A549 (cell line): ENCODE measurements at regions of chr10 and their contacts with region 1.

Region 1: DNA sequence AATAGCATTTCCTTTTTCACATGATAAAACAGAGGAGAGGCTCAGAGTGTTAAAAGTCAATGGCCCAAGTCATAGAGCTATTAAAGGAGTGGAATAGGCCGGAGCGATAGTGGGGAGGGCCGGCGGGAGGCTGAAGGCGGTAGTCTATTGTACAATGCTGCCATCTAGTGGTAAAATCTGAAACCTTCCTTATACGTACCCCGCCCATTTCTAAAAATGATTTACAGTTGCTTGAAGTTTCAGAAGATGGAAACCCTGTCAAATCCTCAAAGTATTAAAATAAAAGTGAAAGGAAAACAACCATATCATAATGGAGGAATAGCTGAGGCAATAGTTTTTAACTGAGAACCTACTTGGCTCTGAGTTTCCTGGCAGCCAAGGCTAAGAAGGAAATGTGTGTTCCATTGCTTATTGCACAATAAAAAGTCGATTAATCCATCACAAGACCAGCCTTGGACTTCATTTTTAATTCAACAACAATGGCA is 209.1 kb downstream of the CCSER2 start:
- DNase-seq: peak; percentile 57 to 67
- ATAC-seq: peak; percentile 44 to 72; a peak in 5 of 6 replicates
- H3K4me3 ChIP-seq: no peak overlapping the region
- H3K27ac ChIP-seq: no peak overlapping the region
- H3K4me1 ChIP-seq: peaks cover 10% of the 10 kb centered on the region
- CTCF ChIP-seq: peak; percentile 92
- EP300 ChIP-seq: no peak
- POLR2A ChIP-seq: no peak
- RAD21 ChIP-seq: peak; percentile 93 to 95

Region 2: DNA sequence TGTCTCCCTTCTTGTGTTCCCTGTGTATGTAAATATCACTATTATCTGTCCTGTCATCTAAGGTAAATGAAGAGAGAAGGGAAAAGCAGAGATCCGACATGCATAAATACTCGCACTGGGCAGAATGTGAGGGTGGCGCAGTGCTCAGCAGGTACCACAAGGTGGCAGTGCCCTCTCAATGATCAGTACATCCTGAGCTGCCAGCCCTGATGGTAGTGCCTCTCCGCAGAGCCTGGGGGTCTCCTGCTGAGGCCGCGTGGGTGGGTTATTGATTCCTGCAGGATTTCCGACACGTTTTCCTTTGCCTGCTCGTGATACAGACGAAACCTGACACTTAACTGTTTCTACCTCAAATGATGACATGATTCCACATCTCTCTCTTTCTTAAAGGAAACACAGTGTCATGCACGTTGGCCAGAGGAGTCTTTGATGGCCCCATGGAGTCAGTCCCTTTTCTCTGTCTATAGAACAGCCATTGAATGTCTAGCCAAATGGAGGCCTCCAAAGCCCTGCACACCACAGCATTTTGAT is 272.8 kb before region 1 on chr10:
- CTCF ChIA-PET with region 1: interaction called, 341 read pairs
- POLR2A ChIA-PET with region 1: no interaction called
- DNase-seq: peak; percentile 58 to 69
- ATAC-seq: peak; percentile 92 to 97
- H3K4me3 ChIP-seq: no peak overlapping the region
- H3K27ac ChIP-seq: no peak overlapping the region
- H3K4me1 ChIP-seq: no peaks in the 10 kb centered on the region
- CTCF ChIP-seq: peak; percentile 90
- EP300 ChIP-seq: no peak
- POLR2A ChIP-seq: no peak
- RAD21 ChIP-seq: peak; percentile 92

Region 3: DNA sequence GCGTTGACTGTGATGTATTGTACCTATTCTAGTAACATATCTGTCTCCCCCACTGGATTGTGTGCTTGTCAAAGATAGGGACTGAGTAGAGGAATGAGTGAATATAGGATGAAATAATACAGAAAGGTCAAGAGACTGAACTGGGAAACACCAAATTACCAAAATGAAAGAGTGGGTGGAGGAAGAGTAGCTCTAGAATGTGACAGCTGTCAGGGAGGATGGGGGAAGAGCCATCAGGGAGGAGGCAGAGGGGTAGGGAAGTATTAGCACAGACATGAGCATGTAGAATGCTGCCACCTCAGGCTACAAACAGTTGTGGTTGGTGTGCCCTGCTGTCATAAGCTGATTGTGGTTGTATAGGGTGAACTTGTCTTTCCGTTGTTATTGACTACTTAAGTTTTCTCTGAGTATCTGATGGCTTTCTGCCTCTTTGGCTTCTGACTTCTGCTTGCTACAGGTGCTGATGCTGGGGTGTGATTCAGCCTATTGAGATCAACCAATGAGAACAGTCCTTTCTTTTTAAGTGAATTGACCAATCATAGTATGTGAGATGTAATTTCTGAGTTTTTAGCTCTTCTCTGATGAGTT is 203.5 kb before region 1 on chr10:
- CTCF ChIA-PET with region 1: interaction called, 12 read pairs
- POLR2A ChIA-PET with region 1: no interaction called
- DNase-seq: no peak
- ATAC-seq: 0 out of 6 replicates have a peak, but pooled peaks of 1 of the 2 experiments have one; percentile 16
- H3K4me3 ChIP-seq: no peak overlapping the region
- H3K27ac ChIP-seq: no peak overlapping the region
- H3K4me1 ChIP-seq: peaks cover 27% of the 10 kb centered on the region; the same call in 2 of the 3 replicates
- CTCF ChIP-seq: no peak
- EP300 ChIP-seq: no peak
- POLR2A ChIP-seq: no peak
- RAD21 ChIP-seq: no peak

Region 4: DNA sequence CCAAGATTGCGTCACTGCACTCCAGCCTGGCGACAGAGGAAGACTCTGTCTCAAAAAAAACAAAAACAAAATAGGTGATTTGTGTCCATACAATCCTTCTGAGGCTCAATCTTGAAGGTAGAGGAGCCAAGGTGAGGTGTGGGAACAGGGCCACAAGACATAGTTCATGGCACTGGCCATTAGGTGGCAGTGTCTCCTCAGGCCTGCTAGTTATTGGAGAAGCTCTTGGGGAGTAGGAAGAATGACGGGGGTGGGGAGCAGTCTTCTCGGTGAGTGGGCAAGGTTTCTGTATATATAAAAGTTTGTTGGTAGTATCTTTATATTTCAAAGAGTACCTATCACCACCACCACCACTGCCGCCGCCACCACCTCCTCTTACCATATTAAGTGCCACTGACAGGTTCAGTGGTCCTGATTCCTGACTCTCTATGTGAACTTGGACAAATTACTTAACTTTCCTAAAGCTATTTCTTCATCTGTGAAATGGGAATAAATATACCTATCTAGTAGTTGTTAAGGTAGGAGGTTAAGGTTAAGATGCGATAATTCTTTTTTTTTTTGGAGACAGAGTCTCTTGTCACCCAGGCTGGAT is 185.1 kb before region 1 on chr10:
- CTCF ChIA-PET with region 1: interaction called, 33 read pairs
- POLR2A ChIA-PET with region 1: no interaction called
- DNase-seq: peak; percentile 60 to 67
- ATAC-seq: peak; percentile 92 to 94
- H3K4me3 ChIP-seq: no peak overlapping the region
- H3K27ac ChIP-seq: no peak overlapping the region
- H3K4me1 ChIP-seq: peaks cover 27% of the 10 kb centered on the region; the same call in 2 of the 3 replicates
- CTCF ChIP-seq: peak; percentile 64
- EP300 ChIP-seq: no peak
- POLR2A ChIP-seq: no peak
- RAD21 ChIP-seq: peak; percentile 62 to 69; a peak in 4 of 5 replicates

Region 5: DNA sequence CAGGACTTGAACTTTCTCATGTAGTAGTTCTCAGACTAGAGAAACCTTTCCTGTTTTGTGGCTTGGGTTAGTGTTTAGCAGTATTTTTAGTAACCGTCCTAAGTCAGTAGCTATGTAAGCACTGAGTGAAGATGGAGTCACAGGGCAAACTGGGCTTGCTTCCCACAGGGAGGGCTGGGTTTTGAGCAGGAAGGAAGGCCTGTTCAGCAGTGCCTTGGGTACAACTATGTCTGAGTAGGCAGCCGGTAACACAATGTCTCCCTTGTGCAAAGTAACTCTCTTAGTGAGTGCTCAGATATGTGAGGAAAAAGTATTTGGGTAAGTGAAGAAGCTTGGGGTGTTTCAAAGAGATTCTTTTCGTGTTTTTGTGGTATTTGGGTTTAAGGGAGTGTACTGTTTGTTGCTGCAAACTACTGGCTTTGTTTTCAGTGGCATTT is 112.7 kb before region 1 on chr10:
- CTCF ChIA-PET with region 1: interaction called, 17 read pairs
- POLR2A ChIA-PET with region 1: no interaction called
- DNase-seq: peak in 1 of 2 experiments; percentile 71
- ATAC-seq: peak; percentile 89 to 96
- H3K4me3 ChIP-seq: no peak overlapping the region
- H3K27ac ChIP-seq: peak overlapping the region; percentile 7 to 69; a peak in 4 of 6 replicates
- H3K4me1 ChIP-seq: peaks cover 17% of the 10 kb centered on the region; the same call in 2 of the 3 replicates
- CTCF ChIP-seq: no peak
- EP300 ChIP-seq: no peak
- POLR2A ChIP-seq: no peak
- RAD21 ChIP-seq: no peak

Region 6: GRCh38 chr10:84548869-84549268 is 11.4 kb after region 1 on chr10:
- CTCF ChIA-PET with region 1: interaction called, 35 read pairs
- POLR2A ChIA-PET with region 1: no interaction called
- DNase-seq: no peak
- ATAC-seq: peak in 1 of 2 experiments; percentile 73; a peak in 3 of 6 replicates
- H3K4me3 ChIP-seq: no peak overlapping the region
- H3K27ac ChIP-seq: no peak overlapping the region
- H3K4me1 ChIP-seq: peaks cover 6% of the 10 kb centered on the region; the same call in 2 of the 3 replicates
- CTCF ChIP-seq: no peak
- EP300 ChIP-seq: no peak
- POLR2A ChIP-seq: no peak
- RAD21 ChIP-seq: no peak